ENCODE measurements at regions of chr14 and their contacts with region 1.

Region 1: GRCh38 chr14:88492272-88493089 is 62.3 kb downstream of the PTPN21 start:
- DNase-seq: peak in 39 of 42 donors; percentile 14 to 92 (median 65)

Region 2: DNA sequence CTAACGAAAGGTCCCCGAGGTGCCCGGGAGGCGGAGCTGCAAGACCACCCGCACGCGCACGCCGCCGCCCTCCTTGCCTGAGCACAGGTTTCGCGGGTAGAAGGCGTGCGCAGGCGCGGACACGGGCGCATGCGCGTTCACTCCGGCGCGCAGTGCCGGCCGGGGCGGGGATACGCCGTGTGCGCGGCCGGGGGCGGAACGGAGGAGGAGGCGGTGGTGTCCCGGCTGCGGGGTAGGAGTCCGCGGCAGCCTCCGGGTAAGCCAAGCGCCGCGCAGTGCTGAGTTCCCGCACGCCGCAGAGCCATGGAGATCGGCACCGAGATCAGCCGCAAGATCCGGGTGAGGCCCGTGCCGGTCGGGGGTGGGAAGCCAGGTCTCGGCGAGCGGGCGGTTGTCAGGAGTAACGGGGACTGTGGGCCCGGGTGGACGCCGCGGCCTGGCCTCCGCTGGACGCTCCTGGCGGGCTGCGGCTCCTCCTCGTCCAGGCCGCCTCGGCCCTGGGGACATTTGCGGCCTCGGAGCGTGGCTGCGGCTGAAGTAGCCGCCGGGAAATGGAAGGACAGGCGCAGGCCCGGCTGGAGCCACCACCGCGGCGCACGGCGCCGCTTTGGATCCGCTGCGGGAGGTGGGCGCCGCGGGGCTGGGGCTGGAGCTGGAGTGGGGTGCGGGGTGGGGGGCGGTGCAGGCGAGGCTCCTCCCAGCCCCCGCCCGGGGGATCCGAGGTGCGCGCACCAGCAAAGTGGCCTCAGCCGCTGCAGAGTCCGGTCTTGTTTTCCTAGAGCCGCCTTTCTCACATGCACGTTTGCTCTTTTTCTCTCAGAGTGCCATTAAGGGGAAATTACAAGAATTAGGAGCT is 70.6 kb after region 1 on chr14 and contains the start of gene ZC3H14:
- intact Hi-C with region 1: loop called (anchors 5 kb)
- DNase-seq: peak; percentile 58 to 94 (median 86)

Measured in head of caudate nucleus (tissue), 42 donors.